PC-3 (cell line): ENCODE measurements at regions of chr7 and their contacts with region 1.

Region 1: GRCh38 chr7:134520130-134520529 is 7.2 kb upstream of the AKR1B10 start:
- DNase-seq: peak; percentile 42
- ATAC-seq: no peak; the same call in 1 of the 2 replicates
- H3K4me3 ChIP-seq: peak overlapping the region; percentile 60
- H3K27ac ChIP-seq: no peak overlapping the region
- H3K4me1 ChIP-seq: peaks cover 37% of the 10 kb centered on the region
- H3K27me3 ChIP-seq: no peaks in the 10 kb centered on the region
- CTCF ChIP-seq: no peak; the same call in 1 of the 2 replicates

Region 2: GRCh38 chr7:134557391-134557790 is 37.3 kb after region 1 on chr7:
- CTCF ChIA-PET with region 1: no interaction called
- POLR2A ChIA-PET with region 1: no interaction called
- intact Hi-C with region 1: no loop called
- DNase-seq: no peak
- ATAC-seq: no peak
- H3K4me3 ChIP-seq: no peak overlapping the region
- H3K27ac ChIP-seq: no peak overlapping the region
- H3K4me1 ChIP-seq: peaks cover 20% of the 10 kb centered on the region
- H3K27me3 ChIP-seq: no peaks in the 10 kb centered on the region
- CTCF ChIP-seq: no peak

Region 3: GRCh38 chr7:134605973-134606923 is 86.1 kb after region 1 on chr7:
- CTCF ChIA-PET with region 1: no interaction called
- POLR2A ChIA-PET with region 1: interaction called, 4 read pairs
- intact Hi-C with region 1: loop called (anchors 1 kb)
- DNase-seq: peak; percentile 78
- ATAC-seq: peak; percentile 96
- H3K4me3 ChIP-seq: peak overlapping the region; percentile 24; the same call in 1 of the 2 replicates
- H3K27ac ChIP-seq: peak overlapping the region; percentile 56
- H3K4me1 ChIP-seq: peaks cover 11% of the 10 kb centered on the region
- H3K27me3 ChIP-seq: no peaks in the 10 kb centered on the region
- CTCF ChIP-seq: peak; percentile 96